ENCODE measurements at regions of chr2 and their contacts with region 1.

Region 1: DNA sequence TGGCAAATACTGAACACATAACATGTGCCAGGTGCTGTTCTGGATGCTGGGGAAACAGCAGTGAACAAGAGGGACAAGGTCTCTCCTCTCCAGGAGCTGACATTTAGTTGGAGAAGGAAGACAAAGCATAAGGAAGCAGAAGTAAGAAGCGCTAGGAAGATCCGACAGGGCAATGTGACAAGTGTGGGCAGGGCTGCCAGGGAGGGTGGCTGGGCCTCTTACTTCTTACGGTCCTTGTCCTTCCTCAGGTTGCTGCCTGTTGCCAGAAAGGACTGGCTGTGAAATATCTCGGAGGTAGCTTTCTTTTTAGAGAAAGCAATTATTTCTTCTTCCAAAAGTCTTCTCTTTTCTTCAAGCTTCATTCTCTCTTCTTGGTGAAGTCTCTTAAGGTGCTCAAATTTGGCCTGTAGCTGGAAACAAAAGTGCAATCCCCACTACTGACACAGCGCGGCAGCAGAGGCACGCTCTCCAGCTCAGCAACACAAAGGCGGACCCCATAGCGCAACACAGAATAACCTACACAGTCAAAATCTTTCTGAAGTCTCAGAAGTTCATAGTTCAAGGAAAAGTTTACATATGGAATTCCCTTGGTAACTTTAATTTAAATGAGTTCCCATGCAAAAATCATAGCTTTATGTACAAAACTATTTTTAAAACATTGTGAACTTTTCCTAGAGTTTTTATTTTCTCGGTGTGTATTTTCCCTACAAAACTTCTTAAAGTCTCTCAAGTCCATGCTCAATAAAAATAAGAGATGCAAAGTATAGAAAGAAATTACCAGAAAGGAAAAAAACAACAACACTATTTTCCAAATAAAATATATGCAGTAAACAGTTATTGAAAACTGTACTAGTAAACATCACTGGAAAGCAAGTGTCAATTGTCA is 67.7 kb downstream of the SEPTIN10 start:
- DNase-seq: peak; percentile 29 to 81
- H3K4me3 ChIP-seq: no peak overlapping the region
- H3K27ac ChIP-seq: no peak overlapping the region
- H3K4me1 ChIP-seq: no peaks in the 10 kb centered on the region
- H3K27me3 ChIP-seq: no peaks in the 10 kb centered on the region
- CTCF ChIP-seq: peak; percentile 82 to 90 (median 87)
- EP300 ChIP-seq: no peak
- POLR2A ChIP-seq: no peak
- RAD21 ChIP-seq: peak; percentile 92

Region 2: GRCh38 chr2:109351164-109351756 is 194.8 kb before region 1 on chr2:
- CTCF ChIA-PET with region 1: no interaction called
- POLR2A ChIA-PET with region 1: no interaction called
- DNase-seq: peak in 1 of 2 experiments; percentile 33
- H3K4me3 ChIP-seq: no peak overlapping the region
- H3K27ac ChIP-seq: no peak overlapping the region
- H3K4me1 ChIP-seq: peaks cover 0 to 5% (median 0%) of the 10 kb centered on the region in 4 experiments; a peak in 2 of 7 replicates
- H3K27me3 ChIP-seq: no peaks in the 10 kb centered on the region
- CTCF ChIP-seq: no peak
- EP300 ChIP-seq: no peak
- POLR2A ChIP-seq: no peak
- RAD21 ChIP-seq: no peak

Region 3: GRCh38 chr2:109486711-109487535 is 59.1 kb before region 1 on chr2:
- CTCF ChIA-PET with region 1: no interaction called
- POLR2A ChIA-PET with region 1: no interaction called
- DNase-seq: no peak
- H3K4me3 ChIP-seq: no peak overlapping the region
- H3K27ac ChIP-seq: no peak overlapping the region
- H3K4me1 ChIP-seq: no peaks in the 10 kb centered on the region
- H3K27me3 ChIP-seq: no peaks in the 10 kb centered on the region
- CTCF ChIP-seq: no peak
- EP300 ChIP-seq: no peak
- POLR2A ChIP-seq: no peak
- RAD21 ChIP-seq: no peak

Region 4: DNA sequence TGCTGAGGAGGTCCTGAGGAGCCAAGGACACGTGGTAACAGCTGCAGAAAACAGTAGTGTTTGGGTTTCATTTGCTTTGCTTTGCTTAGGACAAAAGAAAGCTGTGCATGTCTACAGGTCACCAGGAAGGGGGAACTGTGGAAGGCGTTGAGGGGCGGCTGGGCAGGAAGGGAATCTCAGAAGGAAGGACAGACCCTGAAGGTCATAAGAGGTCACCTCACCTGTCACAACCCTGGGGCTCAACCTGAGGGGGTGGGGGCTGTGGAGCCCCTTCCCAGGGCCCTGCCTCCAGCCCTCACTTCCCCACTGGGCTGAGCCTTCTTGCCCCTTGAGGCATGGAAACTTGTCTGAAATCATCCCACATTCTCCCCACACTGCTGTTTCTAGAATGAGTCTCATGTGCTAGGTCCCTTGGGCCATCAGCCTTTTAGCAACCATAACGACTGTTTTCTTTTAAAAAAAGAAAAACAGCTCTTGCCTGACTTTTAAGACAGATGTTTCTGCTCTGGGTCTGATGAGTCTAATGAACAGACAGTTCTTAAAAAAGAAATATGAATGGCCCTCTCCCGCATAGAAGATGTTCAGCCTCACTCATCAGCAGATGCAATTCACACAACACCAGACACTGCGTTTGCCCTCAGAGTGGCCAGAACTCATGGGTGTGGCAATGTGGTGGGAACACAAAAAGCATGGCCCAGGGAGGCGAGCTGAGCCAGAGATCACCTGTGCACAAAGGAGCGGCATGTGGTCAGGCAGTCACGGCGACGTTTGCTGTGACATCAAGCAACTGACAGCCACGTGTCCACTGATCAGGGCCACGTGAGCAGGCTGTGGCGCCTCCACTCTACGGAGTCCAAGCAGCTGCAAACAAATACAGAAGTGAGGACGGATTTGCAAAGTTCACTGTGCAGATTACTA is 16.3 kb before region 1 on chr2:
- CTCF ChIA-PET with region 1: interaction called, 67 read pairs
- POLR2A ChIA-PET with region 1: interaction called, 3 read pairs
- DNase-seq: no peak
- H3K4me3 ChIP-seq: no peak overlapping the region
- H3K27ac ChIP-seq: no peak overlapping the region
- H3K4me1 ChIP-seq: no peaks in the 10 kb centered on the region
- H3K27me3 ChIP-seq: no peaks in the 10 kb centered on the region
- CTCF ChIP-seq: no peak
- EP300 ChIP-seq: no peak
- POLR2A ChIP-seq: no peak
- RAD21 ChIP-seq: no peak

Region 5: DNA sequence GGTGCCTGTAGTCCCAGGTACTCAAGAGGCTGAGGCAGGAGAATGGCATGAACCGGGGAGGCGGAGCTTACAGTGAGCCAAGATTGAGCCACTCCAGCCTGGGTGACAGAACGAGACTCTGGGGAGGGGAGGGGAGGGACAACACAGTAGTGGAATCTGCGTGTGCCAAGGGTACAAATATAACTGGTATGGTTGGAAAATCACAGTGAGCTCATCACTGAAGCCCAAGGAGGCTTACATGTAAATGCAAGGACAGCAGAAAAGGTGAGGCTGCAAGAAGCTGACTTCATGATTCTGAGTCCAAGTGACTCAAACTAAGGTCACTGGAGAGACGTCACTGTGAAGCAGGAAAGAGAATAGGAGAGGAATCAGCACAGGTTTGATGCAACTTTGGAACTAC is 58.5 kb after region 1 on chr2:
- CTCF ChIA-PET with region 1: interaction called, 10 read pairs
- POLR2A ChIA-PET with region 1: interaction called, 3 read pairs
- DNase-seq: no peak
- H3K4me3 ChIP-seq: no peak overlapping the region
- H3K27ac ChIP-seq: no peak overlapping the region
- H3K4me1 ChIP-seq: peaks cover 2 to 8% (median 5%) of the 10 kb centered on the region in 4 experiments; a peak in 3 of 7 replicates
- H3K27me3 ChIP-seq: no peaks in the 10 kb centered on the region
- CTCF ChIP-seq: no peak
- EP300 ChIP-seq: no peak
- POLR2A ChIP-seq: no peak
- RAD21 ChIP-seq: no peak

Region 6: GRCh38 chr2:109663721-109664120 is 117.7 kb after region 1 on chr2:
- CTCF ChIA-PET with region 1: interaction called, 35 read pairs
- POLR2A ChIA-PET with region 1: no interaction called
- DNase-seq: no peak
- H3K4me3 ChIP-seq: no peak overlapping the region
- H3K27ac ChIP-seq: no peak overlapping the region
- H3K4me1 ChIP-seq: peaks cover 0 to 6% (median 2%) of the 10 kb centered on the region in 4 experiments; a peak in 4 of 7 replicates
- H3K27me3 ChIP-seq: no peaks in the 10 kb centered on the region
- CTCF ChIP-seq: no peak
- EP300 ChIP-seq: no peak
- POLR2A ChIP-seq: no peak
- RAD21 ChIP-seq: no peak

Region 7: DNA sequence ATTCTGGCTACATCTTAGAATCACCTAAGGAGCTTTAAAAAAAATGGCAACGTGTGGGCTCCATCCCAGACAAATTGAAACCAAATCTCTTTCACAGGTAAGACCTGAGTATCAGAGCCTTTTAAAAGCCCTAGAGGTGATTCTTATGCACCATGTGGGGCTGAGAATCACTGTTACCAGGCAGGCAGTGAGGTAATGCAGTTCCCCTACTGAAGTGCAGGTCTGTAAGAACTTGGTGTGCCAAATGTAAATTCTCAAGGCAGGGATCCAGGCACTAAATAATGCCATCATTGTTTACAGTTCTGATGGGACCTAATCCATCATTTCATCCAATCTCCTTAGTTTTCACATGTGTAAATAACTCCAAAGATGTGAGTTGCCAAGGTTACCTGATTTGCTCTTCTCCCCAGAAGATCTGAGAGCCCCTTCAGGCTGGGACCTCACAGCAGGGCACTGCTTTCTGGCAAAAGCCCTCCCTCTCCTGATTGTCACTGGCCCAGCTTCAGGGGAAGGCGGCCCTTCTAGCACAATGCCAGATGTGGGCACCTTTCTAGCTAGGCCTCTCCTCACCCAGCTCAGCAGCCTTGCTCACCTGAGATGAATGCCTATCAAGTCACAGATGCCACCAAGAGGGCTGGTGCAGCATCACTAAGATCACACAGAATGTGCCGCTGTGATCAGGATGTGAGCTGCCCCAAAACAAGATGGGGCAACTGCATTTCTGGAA is 174.5 kb after region 1 on chr2:
- CTCF ChIA-PET with region 1: interaction called, 51 read pairs
- POLR2A ChIA-PET with region 1: no interaction called
- DNase-seq: peak in 1 of 2 experiments; percentile 35
- H3K4me3 ChIP-seq: no peak overlapping the region
- H3K27ac ChIP-seq: no peak overlapping the region
- H3K4me1 ChIP-seq: no peaks in the 10 kb centered on the region
- H3K27me3 ChIP-seq: no peaks in the 10 kb centered on the region
- CTCF ChIP-seq: no peak
- EP300 ChIP-seq: no peak
- POLR2A ChIP-seq: no peak
- RAD21 ChIP-seq: no peak

Measured in H1 (cell line).